ENCODE measurements at regions of chr6 and their contacts with region 1.

Region 1: GRCh38 chr6:150068720-150069648 is at the start of gene ULBP3:
- DNase-seq: peak; percentile 98
- H3K4me3 ChIP-seq: peak within 1 kb of the TSS; percentile 63 to 88 (median 82)
- H3K27ac ChIP-seq: peak within 1 kb of the TSS; percentile 61
- H3K4me1 ChIP-seq: peaks cover 37% of the 10 kb centered on the region
- H3K27me3 ChIP-seq: no peaks in the 10 kb centered on the region
- CTCF ChIP-seq: peak; percentile 32 to 64
- total RNA-seq, gene ULBP3: 14.5 to 28.5 TPM

Region 2: DNA sequence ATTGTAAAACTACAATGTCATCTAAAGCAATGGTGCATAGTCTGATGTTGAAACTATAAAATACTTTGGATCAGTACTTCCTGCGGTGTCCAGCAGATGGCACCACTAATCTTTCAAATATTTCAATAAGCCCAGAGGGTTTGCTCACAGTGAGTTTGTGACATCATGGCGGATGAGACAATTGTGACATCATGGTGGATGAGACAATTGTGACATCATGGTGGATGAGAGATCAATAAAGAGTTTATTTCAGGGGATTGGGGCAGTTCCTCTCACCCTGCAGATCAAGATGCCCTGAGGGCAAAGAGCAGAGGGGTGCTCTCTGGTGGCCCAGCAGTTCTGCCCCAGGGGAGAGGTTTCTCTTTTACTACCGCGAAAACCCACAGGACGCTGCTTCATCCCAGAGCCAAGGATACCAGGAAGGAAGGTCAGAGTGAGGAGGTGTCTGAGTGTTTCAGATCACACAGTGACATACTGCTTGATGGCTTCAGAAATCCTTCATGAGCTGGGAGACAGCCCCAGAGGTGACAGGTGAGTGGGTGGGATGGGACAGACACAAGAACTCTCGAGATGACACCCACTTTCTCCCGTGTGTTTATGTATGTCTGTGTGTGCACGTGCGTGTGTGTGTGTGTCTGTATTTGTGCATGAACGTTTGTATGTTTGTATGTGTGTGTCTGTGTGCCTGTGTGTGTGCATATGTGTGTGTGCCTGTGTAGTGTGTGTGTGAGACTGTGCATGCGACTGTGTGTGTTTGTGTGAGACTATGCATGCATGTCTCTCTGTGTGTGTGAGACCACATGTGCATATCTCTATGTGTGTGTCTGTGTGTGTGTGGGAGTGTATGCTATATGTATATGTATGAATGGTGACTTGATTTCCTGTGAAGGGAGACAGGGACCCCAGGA is 134.5 kb before region 1 on chr6:
- CTCF ChIA-PET with region 1: no interaction called
- dilution Hi-C with region 1: no loop called
- in situ Hi-C with region 1: no loop called
- intact Hi-C with region 1: loop called (anchors 1 kb)
- DNase-seq: peak; percentile 56
- H3K4me3 ChIP-seq: no peak overlapping the region
- H3K27ac ChIP-seq: no peak overlapping the region
- H3K4me1 ChIP-seq: peaks cover 11% of the 10 kb centered on the region
- H3K27me3 ChIP-seq: no peaks in the 10 kb centered on the region
- CTCF ChIP-seq: peak; percentile 67 to 70

Region 3: DNA sequence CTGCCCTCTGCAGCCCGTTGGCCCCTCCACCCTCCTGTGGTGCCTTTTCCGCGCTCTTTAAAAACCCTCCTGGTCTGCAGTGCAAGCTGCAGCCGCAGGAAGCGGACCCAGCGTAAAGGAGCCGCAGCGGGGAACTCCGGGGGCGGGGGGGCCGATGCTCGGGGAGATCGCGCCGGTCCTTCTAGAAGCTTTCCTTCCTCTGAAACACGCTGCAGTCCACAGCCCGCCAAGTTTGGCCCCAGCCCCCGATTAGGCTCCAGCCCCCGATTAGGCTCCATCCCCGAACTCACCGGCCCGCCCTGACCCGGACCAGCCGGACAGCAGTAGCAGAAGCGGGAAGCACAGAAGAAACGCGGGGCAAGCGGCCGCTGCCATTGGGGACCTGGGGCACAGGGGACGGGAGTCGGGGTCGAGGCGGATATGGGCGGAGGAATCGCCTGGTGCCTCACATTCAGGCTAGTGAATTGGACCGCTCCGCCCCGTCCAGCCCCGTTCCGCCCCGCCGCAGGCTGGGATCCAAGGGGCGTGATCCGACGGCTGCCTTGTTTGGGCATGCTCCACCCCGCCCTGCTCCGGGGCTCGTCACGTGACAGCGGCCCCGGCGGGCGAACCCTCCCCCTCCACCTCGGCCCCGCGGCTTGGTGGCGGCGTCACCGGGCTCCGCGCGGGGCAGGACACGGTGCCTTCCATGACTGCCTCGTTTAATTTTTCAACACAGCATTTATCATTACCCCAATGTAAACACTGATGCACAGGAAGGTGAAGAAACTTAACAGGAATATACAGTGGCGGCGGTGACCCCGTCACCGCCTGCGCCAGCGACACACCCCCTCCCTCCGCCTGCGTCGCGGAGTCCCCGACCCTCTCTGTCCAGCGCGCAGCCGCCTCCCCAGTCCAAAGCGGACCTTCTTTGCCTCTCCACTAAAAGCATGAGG is 63.9 kb before region 1 on chr6:
- CTCF ChIA-PET with region 1: interaction called, 15 read pairs
- dilution Hi-C with region 1: no loop called
- in situ Hi-C with region 1: no loop called
- intact Hi-C with region 1: loop called (anchors 1 kb)
- DNase-seq: peak; percentile 88
- H3K4me3 ChIP-seq: peak overlapping the region; percentile 66 to 88 (median 75)
- H3K27ac ChIP-seq: no peak overlapping the region
- H3K4me1 ChIP-seq: peaks cover 14% of the 10 kb centered on the region
- H3K27me3 ChIP-seq: no peaks in the 10 kb centered on the region
- CTCF ChIP-seq: no peak

Region 4: DNA sequence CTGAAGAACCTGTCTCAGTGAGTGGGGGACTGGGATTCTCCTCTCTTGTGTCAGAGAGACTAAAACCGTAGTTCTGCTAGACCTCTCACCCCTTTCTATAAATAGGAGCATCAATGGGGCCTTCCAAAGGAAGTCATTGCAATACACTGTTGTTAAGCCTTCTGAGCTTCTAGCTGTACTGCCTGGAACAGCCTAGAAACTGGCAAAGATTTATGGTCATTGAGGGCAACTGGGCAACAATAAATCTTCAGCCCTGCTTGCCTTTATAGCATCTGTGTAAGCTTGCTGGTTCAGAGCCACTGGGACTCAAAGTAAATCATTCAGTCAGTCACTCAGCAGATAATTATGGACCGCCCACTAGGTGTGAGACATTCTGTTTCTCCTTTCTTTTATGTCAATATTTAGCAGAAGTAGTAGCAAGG is 127.0 kb after region 1 on chr6:
- CTCF ChIA-PET with region 1: no interaction called
- dilution Hi-C with region 1: no loop called
- in situ Hi-C with region 1: no loop called
- intact Hi-C with region 1: no loop called
- DNase-seq: no peak
- H3K4me3 ChIP-seq: no peak overlapping the region
- H3K27ac ChIP-seq: no peak overlapping the region
- H3K4me1 ChIP-seq: peaks cover 23% of the 10 kb centered on the region
- H3K27me3 ChIP-seq: no peaks in the 10 kb centered on the region
- CTCF ChIP-seq: no peak

Measured in mammary epithelial cell (primary cell).